ENCODE measurements at regions of chr10 and their contacts with region 1.

Region 1: GRCh38 chr10:92290837-92291615 is at the starts of genes CPEB3 and MARCHF5:
- DNase-seq: peak; percentile 98
- H3K4me3 Mint-ChIP-seq: peak within 1 kb of the TSS; percentile 93
- H3K27ac Mint-ChIP-seq: peak within 1 kb of the TSS; percentile 85
- H3K4me1 Mint-ChIP-seq: peaks cover 22% of the 10 kb centered on the region
- H3K27me3 Mint-ChIP-seq: no peaks in the 10 kb centered on the region
- total RNA-seq, gene CPEB3: 2.2 and 2.5 TPM in 2 replicates
- total RNA-seq, gene MARCHF5: 22.0 and 24.7 TPM in 2 replicates

Region 2: GRCh38 chr10:91797874-91798648 is 493.0 kb before region 1 on chr10 and contains the start of gene TNKS2:
- intact Hi-C with region 1: loop called (anchors 2 kb)
- DNase-seq: peak; percentile 99
- H3K4me3 Mint-ChIP-seq: peak within 1 kb of the TSS; percentile 96
- H3K27ac Mint-ChIP-seq: peak within 1 kb of the TSS; percentile 98
- H3K4me1 Mint-ChIP-seq: peaks cover 51% of the 10 kb centered on the region
- H3K27me3 Mint-ChIP-seq: no peaks in the 10 kb centered on the region
- total RNA-seq, gene TNKS2: 27.5 and 28.8 TPM in 2 replicates

Region 3: GRCh38 chr10:92045641-92046106 is 245.4 kb before region 1 on chr10:
- intact Hi-C with region 1: no loop called
- DNase-seq: no peak
- H3K4me3 Mint-ChIP-seq: no peak overlapping the region
- H3K27ac Mint-ChIP-seq: no peak overlapping the region
- H3K4me1 Mint-ChIP-seq: peaks cover 10% of the 10 kb centered on the region
- H3K27me3 Mint-ChIP-seq: no peaks in the 10 kb centered on the region

Region 4: GRCh38 chr10:92087750-92088395 is 203.2 kb before region 1 on chr10:
- intact Hi-C with region 1: loop called (anchors 1 kb)
- DNase-seq: peak; percentile 87
- H3K4me3 Mint-ChIP-seq: no peak overlapping the region
- H3K27ac Mint-ChIP-seq: no peak overlapping the region
- H3K4me1 Mint-ChIP-seq: peaks cover 4% of the 10 kb centered on the region
- H3K27me3 Mint-ChIP-seq: no peaks in the 10 kb centered on the region

Region 5: GRCh38 chr10:92208736-92209327 is 82.2 kb before region 1 on chr10:
- intact Hi-C with region 1: loop called (anchors 1 kb)
- DNase-seq: no peak
- H3K4me3 Mint-ChIP-seq: no peak overlapping the region
- H3K27ac Mint-ChIP-seq: no peak overlapping the region
- H3K4me1 Mint-ChIP-seq: peaks cover 15% of the 10 kb centered on the region
- H3K27me3 Mint-ChIP-seq: peaks cover 3% of the 10 kb centered on the region

Region 6: GRCh38 chr10:92432596-92432995 is 141.6 kb after region 1 on chr10:
- intact Hi-C with region 1: no loop called
- DNase-seq: no peak
- H3K4me3 Mint-ChIP-seq: no peak overlapping the region
- H3K27ac Mint-ChIP-seq: no peak overlapping the region
- H3K4me1 Mint-ChIP-seq: no peaks in the 10 kb centered on the region
- H3K27me3 Mint-ChIP-seq: no peaks in the 10 kb centered on the region

Region 7: GRCh38 chr10:92573798-92574547 is 282.9 kb after region 1 on chr10 and contains the start of gene IDE:
- intact Hi-C with region 1: loop called (anchors 5 kb)
- DNase-seq: peak; percentile 96
- H3K4me3 Mint-ChIP-seq: peak within 1 kb of the TSS; percentile 79
- H3K27ac Mint-ChIP-seq: peak within 1 kb of the TSS; percentile 92
- H3K4me1 Mint-ChIP-seq: peaks cover 29% of the 10 kb centered on the region
- H3K27me3 Mint-ChIP-seq: no peaks in the 10 kb centered on the region
- total RNA-seq, gene IDE: 47.9 and 50.2 TPM in 2 replicates

Region 8: GRCh38 chr10:92598321-92598720 is 307.3 kb after region 1 on chr10:
- intact Hi-C with region 1: no loop called
- DNase-seq: no peak
- H3K4me3 Mint-ChIP-seq: peak overlapping the region; percentile 12
- H3K27ac Mint-ChIP-seq: peak overlapping the region; percentile 36
- H3K4me1 Mint-ChIP-seq: peaks cover 61% of the 10 kb centered on the region
- H3K27me3 Mint-ChIP-seq: no peaks in the 10 kb centered on the region